Activated T-helper 1 cell treated with anti-CD3 and anti-CD28 coated beads, Interleukin-12 subunit alpha, Interleukin-12 subunit beta, Interleukin-2, Interleukin-4 antibody, amounts not matched to agents 30 ng/mL and 10 ng/mL and 1 ng/mL, durations not matched to agents 14 hours and 24 hours and 36 hours (primary cell): ENCODE measurements at regions of chr1 and their contacts with region 1.

Region 1: DNA sequence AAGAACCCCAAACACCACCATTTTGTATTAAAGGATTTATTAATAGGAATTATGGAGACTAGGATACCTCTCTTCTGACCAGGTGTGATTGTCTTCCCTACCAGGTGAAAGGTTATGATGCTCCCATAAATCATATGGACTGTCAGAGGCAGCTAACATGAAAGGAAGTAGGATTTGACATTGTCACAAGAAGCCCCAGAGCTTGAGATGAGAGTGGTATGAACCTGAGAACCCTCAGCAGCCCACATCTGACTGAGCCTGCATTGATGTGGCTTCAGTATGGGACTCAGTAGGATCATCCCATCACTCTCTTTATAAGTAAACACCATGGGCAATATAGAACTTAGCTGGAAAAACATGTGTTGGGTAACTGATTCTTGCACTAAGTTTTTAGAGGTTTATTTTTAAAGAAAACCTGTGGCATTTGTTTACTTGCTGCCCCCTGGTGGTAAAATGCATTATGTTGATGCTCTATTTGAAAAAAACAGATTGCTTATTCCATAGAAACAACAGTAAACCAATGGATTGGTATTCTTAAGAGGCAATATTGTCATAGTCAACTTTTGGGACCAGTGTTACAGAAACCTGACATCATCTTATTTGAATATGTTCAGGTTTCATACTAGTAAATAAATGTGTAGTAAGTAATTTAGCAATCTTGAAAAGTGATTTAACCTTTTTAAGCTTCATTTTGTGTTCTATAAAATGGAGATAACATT is 16.6 kb upstream of the CACYBP start:
- DNase-seq: no peak
- H3K4me3 Mint-ChIP-seq: no peak overlapping the region
- H3K27ac Mint-ChIP-seq: no peak overlapping the region
- H3K4me1 Mint-ChIP-seq: peaks cover 28% of the 10 kb centered on the region
- H3K27me3 Mint-ChIP-seq: no peaks in the 10 kb centered on the region

Region 2: GRCh38 chr1:174262349-174263241 is 720.5 kb before region 1 on chr1:
- intact Hi-C with region 1: loop called (anchors 5 kb)
- DNase-seq: no peak
- H3K4me3 Mint-ChIP-seq: no peak overlapping the region
- H3K27ac Mint-ChIP-seq: no peak overlapping the region
- H3K4me1 Mint-ChIP-seq: no peaks in the 10 kb centered on the region
- H3K27me3 Mint-ChIP-seq: no peaks in the 10 kb centered on the region

Region 3: GRCh38 chr1:174769961-174770549 is 213.1 kb before region 1 on chr1:
- intact Hi-C with region 1: loop called (anchors 1 kb)
- DNase-seq: no peak
- H3K4me3 Mint-ChIP-seq: no peak overlapping the region
- H3K27ac Mint-ChIP-seq: no peak overlapping the region
- H3K4me1 Mint-ChIP-seq: peaks cover 13% of the 10 kb centered on the region
- H3K27me3 Mint-ChIP-seq: no peaks in the 10 kb centered on the region

Region 4: DNA sequence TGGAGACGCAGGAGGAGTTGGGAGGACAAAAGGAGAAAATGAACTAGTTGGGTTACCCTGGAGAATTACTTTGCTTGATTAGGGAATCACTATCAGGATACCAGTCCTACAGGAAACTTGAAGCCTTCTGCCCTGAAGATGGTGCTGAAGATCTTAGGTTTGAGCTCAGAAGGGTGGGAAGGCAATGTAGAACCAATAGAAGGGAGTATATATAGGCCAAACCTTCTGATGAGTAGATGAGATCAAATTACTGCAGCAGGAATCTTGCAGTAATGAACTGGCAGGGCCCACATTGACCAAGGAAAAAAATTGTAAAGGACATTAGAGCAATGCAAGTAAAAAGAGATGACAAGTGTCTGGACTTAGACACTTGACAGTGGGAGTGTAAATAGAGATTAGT is 99.7 kb before region 1 on chr1:
- intact Hi-C with region 1: loop called (anchors 2 kb)
- DNase-seq: no peak
- H3K4me3 Mint-ChIP-seq: no peak overlapping the region
- H3K27ac Mint-ChIP-seq: no peak overlapping the region
- H3K4me1 Mint-ChIP-seq: no peaks in the 10 kb centered on the region
- H3K27me3 Mint-ChIP-seq: no peaks in the 10 kb centered on the region

Region 5: DNA sequence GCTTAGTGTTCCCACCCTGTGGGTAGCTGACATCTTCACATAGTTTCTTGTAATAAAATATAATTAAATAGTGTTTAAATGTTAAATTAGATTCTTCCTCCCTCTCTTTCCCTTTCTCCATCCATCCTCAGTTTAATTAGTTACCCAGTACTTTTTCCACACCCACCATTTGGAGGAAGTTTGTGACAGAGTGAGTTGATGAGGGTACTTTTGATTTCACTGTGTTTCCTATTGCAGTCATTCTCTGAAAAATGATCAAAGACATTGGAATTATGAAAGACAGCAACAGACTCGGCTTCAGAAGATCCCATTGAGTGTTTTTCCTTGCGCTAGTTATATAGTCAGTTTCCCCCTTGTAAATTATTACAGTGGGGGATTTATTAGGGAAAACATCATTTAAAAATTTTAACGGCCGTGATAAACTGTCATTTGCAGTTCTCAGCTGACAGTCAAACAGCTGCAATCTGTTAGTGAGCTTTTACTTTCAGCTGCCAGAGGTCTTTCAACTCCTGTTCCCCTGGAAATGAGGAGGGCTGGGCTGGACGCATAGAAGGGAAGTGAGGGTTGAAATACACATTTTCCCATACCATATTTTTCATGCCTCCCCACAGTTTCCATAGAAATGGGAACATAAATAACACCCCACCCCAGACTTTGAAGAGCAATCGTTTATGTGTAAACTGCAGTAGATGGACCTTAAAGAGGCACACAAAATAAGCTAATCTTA is 44.7 kb before region 1 on chr1:
- intact Hi-C with region 1: loop called (anchors 2 kb)
- DNase-seq: no peak
- H3K4me3 Mint-ChIP-seq: peak overlapping the region; percentile 42
- H3K27ac Mint-ChIP-seq: peak overlapping the region; percentile 79
- H3K4me1 Mint-ChIP-seq: peaks cover 25% of the 10 kb centered on the region
- H3K27me3 Mint-ChIP-seq: no peaks in the 10 kb centered on the region

Region 6: GRCh38 chr1:176479971-176480370 is 1496.8 kb after region 1 on chr1:
- intact Hi-C with region 1: no loop called
- DNase-seq: no peak
- H3K4me3 Mint-ChIP-seq: no peak overlapping the region
- H3K27ac Mint-ChIP-seq: no peak overlapping the region
- H3K4me1 Mint-ChIP-seq: no peaks in the 10 kb centered on the region
- H3K27me3 Mint-ChIP-seq: no peaks in the 10 kb centered on the region